ENCODE measurements at regions of chr10 and their contacts with region 1.

Region 1: GRCh38 chr10:97572214-97572989 is at the start of gene ANKRD2:
- DNase-seq: peak; percentile 77 to 89
- ATAC-seq: peak; percentile 61 to 71
- H3K4me3 ChIP-seq: peak within 1 kb of the TSS; percentile 28 to 58 (median 35)
- H3K27ac ChIP-seq: peak within 1 kb of the TSS; percentile 90 to 92 (median 91)
- H3K4me1 ChIP-seq: peaks cover 61 to 65% of the 10 kb centered on the region in 2 donors
- H3K27me3 ChIP-seq: no peaks in the 10 kb centered on the region
- CTCF ChIP-seq: peak; percentile 89 to 96 (median 93)
- POLR2A ChIP-seq: no peak
- total RNA-seq, gene ANKRD2: 105 to 1,024 (median 853) TPM

Region 2: DNA sequence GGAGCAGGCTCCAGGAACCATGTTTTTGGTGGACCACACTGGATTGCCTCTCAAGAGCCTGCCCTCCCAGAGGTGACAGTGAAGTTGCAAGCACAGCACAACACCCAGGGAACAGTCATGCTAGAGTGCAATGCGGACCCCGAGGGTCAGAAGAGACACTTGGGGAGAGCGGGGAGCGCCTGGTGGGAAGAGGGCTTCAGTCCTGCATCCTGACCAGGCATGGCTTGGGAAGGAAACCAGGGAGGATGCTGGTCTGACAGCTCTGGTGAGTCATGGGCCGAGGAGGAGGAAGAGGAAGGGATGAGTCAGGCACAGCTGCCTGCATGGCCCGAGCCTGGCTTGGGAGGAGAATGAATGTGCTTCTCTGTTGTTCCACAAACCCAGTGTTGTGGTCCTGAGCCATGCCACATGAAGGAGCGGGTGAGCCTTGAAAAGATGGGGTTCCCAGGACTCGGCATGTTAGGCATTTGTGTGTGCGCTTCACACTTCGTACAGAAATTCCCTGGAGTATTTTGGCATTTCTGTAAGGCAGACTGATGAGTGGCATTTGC is 29.3 kb before region 1 on chr10:
- in situ Hi-C with region 1: no loop called
- intact Hi-C with region 1: no loop called
- DNase-seq: peak; percentile 81 to 82
- ATAC-seq: peak; percentile 94 to 96
- H3K4me3 ChIP-seq: no peak overlapping the region
- H3K27ac ChIP-seq: peak overlapping the region; percentile 73 to 85 (median 81)
- H3K4me1 ChIP-seq: peaks cover 48 to 52% of the 10 kb centered on the region in 2 donors
- H3K27me3 ChIP-seq: no peaks in the 10 kb centered on the region
- CTCF ChIP-seq: no peak
- POLR2A ChIP-seq: no peak

Region 3: DNA sequence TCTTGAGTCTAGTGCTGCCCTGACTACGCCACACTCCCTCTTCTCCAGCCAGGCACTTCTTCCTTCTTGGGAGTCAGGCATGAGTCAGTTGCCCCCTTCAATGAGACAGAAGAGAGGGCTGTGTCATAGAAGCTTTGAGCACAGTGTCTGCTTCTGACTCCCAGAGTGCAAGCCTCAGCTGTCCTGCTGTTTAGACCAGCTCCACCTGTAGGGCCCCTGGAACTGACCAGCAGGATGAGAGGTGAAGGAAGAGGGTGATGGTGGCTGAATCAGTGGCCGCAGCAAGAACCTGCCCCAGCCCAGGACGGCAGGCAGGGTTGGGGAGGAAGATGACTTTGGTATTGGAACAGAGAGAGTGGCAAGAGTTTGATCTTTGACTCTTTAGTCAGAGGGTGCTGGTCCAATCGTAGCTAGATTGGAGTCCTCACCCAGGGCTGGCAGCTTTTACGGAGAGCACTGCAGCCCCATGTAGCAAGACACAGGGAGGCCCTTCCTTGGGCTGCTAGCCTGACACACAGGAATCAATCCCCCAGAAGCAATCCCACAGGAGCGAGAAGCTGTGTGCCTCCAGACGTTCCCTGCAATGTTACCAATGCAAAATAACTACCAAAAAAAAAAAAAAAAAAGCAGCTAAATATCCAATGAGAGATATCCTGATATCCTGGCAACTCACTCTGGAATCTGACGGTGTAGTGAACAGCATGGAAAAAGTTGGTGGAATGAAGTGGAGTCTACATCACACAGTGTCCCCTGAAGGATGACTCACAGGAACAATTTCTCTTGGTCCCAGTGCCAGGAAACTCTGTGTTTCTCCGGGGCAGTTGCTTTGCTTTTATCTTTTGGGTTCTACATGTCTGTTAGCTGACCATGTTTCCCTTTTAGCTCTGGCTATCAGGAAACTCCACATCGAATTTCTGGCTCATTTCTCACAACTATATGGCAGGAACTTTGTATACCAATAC is 24.0 kb after region 1 on chr10:
- in situ Hi-C with region 1: no loop called
- intact Hi-C with region 1: loop called (anchors 1 kb)
- DNase-seq: peak; percentile 76 to 85
- ATAC-seq: peak; percentile 90 to 95
- H3K4me3 ChIP-seq: no peak overlapping the region
- H3K27ac ChIP-seq: peak overlapping the region; percentile 88 to 94 (median 92)
- H3K4me1 ChIP-seq: peaks cover 46 to 67% of the 10 kb centered on the region in 2 donors
- H3K27me3 ChIP-seq: no peaks in the 10 kb centered on the region
- CTCF ChIP-seq: no peak
- POLR2A ChIP-seq: peak in 1 of 2 donors; percentile 39

Region 4: GRCh38 chr10:97612386-97612785 is 40.0 kb after region 1 on chr10:
- in situ Hi-C with region 1: loop called (anchors 5 kb)
- intact Hi-C with region 1: loop called (anchors 1 kb)
- DNase-seq: peak in 1 of 2 donors; percentile 55
- ATAC-seq: peak; percentile 91 to 95
- H3K4me3 ChIP-seq: no peak overlapping the region
- H3K27ac ChIP-seq: peak overlapping the region in 3 of 4 donors; percentile 33 to 51 (median 41)
- H3K4me1 ChIP-seq: peaks cover 21 to 24% of the 10 kb centered on the region in 2 donors
- H3K27me3 ChIP-seq: no peaks in the 10 kb centered on the region
- CTCF ChIP-seq: peak; percentile 59 to 73 (median 66)
- POLR2A ChIP-seq: no peak

Region 5: DNA sequence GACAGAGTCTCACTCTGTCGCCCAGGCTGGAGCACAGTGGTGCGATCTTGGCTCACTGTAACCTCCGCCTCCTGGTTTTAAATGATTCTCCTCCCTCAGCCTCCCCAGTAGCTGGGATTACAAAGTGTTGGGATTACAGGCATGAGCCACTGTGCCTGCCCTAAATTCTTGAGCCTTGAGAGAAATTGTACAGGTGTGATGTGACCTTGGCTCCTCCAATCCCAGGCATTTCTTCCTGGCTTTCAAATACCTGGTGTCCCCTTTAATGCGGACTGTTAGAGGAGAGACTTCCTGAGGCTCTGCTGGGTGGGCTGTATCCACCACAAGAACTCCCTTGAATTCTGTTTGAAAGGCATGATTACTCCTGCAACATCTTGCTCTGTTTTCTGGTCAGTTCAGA is 45.9 kb after region 1 on chr10:
- in situ Hi-C with region 1: loop called (anchors 5 kb)
- intact Hi-C with region 1: no loop called
- DNase-seq: no peak
- ATAC-seq: no peak
- H3K4me3 ChIP-seq: no peak overlapping the region
- H3K27ac ChIP-seq: no peak overlapping the region
- H3K4me1 ChIP-seq: no peaks in the 10 kb centered on the region
- H3K27me3 ChIP-seq: no peaks in the 10 kb centered on the region
- CTCF ChIP-seq: no peak
- POLR2A ChIP-seq: no peak

Measured in gastrocnemius medialis (tissue), 4 donors.